Activated CD8-positive, alpha-beta memory T cell treated with anti-CD3 and anti-CD28 coated beads, Interleukin-2, amount 10 ng/mL, durations not matched to agents 7 days and 5 days (primary cell): ENCODE measurements at regions of chr1 and their contacts with region 1.

Region 1: GRCh38 chr1:28581536-28582247 is 10.4 kb upstream of the RAB42 start:
- DNase-seq: peak; percentile 96
- ATAC-seq: peak; percentile 89
- H3K4me3 Mint-ChIP-seq: peak overlapping the region; percentile 85
- H3K27ac Mint-ChIP-seq: peak overlapping the region; percentile 89
- H3K4me1 Mint-ChIP-seq: peaks cover 29% of the 10 kb centered on the region
- H3K27me3 Mint-ChIP-seq: no peaks in the 10 kb centered on the region

Region 2: DNA sequence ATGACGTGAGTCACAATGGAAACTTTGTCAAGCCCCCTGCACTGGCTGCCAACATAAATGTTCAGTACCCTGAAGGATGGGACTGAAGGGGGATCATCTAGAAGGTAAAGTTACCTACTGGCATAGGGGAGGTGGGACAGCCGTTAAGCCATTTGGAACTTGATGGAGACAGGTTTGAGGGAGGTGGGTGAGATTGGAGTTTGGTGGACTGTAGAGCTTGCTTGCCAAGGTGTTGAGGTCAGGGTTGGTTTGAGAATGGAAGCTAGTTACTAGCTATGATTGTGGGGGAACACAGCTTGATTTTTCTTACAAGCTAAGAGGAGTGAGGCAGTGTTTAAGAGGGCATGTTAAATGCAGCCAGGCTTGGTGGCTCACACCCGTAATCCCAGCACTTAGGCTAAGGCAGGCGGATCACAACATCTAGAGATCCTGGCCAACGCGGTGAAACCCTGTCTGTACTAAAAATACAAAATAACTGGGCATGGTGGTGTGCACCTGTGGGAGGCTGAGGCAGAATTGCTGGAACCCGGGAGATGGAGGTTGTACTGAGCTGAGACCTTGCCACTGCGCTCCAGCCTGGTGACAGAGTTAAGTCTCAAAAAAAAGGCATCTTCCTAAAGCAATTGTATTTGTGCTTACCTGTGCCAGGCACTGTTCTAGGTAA is 71.6 kb before region 1 on chr1:
- CTCF ChIA-PET with region 1: interaction called, 19 read pairs
- DNase-seq: no peak
- ATAC-seq: no peak
- H3K4me3 Mint-ChIP-seq: peak overlapping the region; percentile 98
- H3K27ac Mint-ChIP-seq: peak overlapping the region; percentile 99
- H3K4me1 Mint-ChIP-seq: peaks cover 46% of the 10 kb centered on the region
- H3K27me3 Mint-ChIP-seq: peaks cover 2% of the 10 kb centered on the region

Region 3: GRCh38 chr1:28552758-28553663 is 28.7 kb before region 1 on chr1 and contains the start of gene TRNAU1AP:
- CTCF ChIA-PET with region 1: interaction called, 36 read pairs
- DNase-seq: peak; percentile 98
- ATAC-seq: peak; percentile 93
- H3K4me3 Mint-ChIP-seq: peak within 1 kb of the TSS; percentile 93
- H3K27ac Mint-ChIP-seq: peak within 1 kb of the TSS; percentile 97
- H3K4me1 Mint-ChIP-seq: peaks cover 23% of the 10 kb centered on the region
- H3K27me3 Mint-ChIP-seq: no peaks in the 10 kb centered on the region
- total RNA-seq, gene TRNAU1AP: 52.8 to 55.2 TPM

Region 4: DNA sequence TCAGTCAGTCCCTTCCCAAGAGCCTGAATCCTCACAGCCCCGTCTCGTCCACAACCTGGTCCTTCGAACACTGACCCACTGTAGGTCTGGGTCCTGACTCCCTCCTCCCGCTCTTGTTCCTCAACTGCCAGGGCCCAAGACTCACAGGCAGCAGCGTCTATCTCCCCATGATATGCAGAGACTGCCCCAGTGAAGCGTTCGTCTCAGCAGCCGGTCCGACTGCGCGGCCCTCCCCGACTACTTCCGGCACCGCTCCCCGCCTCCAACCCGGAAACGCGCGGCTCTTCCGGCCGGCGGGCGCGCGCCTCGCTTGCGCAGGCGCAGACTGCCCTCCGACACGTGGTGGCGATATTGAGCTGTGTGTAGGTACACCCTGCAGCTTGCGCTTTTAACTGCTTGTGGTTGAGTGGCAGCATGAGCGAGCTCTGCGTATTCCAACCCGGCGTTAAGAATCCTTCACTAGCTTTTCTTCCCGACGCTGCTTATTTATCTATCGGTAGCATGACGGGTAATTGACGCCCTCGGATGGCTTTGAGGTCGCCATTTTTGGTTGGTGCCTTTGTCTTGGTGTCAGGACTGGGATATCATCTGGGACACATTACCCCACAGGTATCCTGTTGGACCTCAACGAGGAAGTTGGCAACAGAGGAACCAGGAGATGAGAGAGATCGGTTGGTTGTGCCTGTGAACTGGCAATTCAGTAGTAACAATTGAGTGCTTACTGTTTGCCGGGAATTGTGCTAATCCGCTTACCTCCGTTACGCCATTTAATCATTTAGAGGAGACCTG is 61.3 kb after region 1 on chr1 and contains the start of gene TAF12:
- CTCF ChIA-PET with region 1: interaction called, 14 read pairs
- DNase-seq: peak; percentile 95
- ATAC-seq: peak; percentile 89
- H3K4me3 Mint-ChIP-seq: peak within 1 kb of the TSS; percentile 97
- H3K27ac Mint-ChIP-seq: peak within 1 kb of the TSS; percentile 94
- H3K4me1 Mint-ChIP-seq: peaks cover 49% of the 10 kb centered on the region
- H3K27me3 Mint-ChIP-seq: no peaks in the 10 kb centered on the region
- total RNA-seq, gene TAF12: 30.4 to 33.0 TPM